H1 (cell line): ENCODE measurements at regions of chr1 and their contacts with region 1.

Region 1: DNA sequence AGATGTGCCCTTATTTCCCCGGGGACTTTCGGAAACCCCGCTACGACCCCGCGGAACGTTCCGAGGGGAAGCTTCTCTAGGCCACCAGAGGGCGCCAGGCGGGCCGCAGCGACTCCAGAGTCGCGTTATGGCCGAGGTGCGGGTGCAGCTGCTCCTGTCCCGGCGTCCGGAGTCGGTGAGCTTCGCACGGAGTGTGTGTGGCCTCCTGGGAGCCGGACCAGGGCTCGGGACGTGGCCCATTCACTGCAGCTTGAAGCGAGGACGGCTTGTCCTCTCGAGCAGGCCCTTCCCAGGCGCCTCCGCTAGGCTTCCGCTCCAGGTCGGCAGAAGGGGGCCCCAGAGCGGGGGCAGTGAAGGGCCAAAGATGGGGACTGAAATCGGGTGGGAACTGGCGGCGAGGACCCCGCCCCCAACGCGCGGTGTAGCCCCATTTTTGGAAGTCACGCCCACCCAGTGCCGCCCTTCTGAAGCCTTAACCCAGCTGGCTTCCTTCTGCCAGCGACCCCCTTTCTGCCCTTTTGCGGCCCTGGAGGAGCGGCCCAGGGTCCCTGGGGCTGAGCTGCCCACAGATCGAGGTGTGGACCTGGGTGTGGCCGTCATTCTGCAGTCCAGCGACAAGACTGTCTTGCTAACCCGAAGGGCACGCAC is at the start of gene NUDT17:
- DNase-seq: peak; percentile 38 to 93
- H3K4me3 ChIP-seq: peak within 1 kb of the TSS; percentile 43 to 77 (median 66)
- H3K27ac ChIP-seq: peak within 1 kb of the TSS; percentile 51; the same call in 1 of the 2 replicates
- H3K4me1 ChIP-seq: peaks cover 0 to 8% (median 0%) of the 10 kb centered on the region in 4 experiments; a peak in 2 of 7 replicates
- H3K27me3 ChIP-seq: no peaks in the 10 kb centered on the region
- CTCF ChIP-seq: peak; percentile 85 to 93 (median 88)
- EP300 ChIP-seq: no peak
- POLR2A ChIP-seq: peak in 1 of 2 experiments; percentile 79; a peak in 2 of 3 replicates
- RAD21 ChIP-seq: peak; percentile 40 to 59; a peak in 3 of 4 replicates
- total RNA-seq, gene NUDT17: 2.7 and 2.8 TPM in 2 replicates

Region 2: DNA sequence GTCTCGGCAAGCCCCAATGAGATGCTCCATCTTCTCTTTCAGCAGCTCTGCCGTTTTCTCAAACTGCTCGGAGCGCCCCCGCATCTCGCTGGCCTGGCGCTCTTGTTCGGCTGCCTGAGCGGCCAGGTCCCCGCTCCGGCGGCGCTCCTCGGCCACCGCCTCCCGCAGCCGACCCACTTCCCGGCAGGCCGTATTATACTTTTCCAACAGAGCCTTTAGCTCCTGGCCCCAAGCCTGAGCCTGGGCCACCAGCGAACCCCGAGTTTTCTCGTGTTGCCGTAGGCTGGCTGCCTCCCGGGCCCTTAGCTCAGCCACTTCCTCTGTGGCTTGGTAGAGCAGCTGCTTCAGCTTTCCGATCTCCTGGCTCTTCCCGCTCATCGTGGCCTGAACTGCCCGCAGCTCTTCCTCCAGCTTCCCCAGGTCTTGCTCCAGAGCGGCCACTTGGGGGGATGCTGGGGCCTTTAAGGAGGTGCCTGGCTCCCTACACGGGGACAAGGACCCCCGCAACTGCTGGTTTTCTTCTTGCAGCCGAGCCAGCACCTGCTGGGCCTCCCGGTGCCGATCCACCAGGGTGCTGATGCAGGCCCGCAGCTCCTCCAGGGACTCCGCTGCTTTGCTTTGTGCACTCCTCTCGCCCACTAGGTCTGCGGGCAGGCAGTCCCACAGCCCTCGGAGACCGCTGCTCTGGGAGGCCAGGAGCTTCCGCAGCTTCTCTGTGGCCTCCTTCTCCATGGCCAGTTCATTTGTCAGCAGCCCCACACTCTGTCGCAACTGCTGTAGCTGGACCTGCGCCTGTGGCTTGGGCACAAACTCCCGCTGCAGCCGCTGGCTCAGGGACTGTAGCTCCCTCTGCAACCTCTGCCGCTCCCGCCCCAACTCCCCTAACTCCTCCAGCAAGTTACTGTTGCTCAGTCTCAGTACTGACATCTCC is 26.6 kb after region 1 on chr1:
- CTCF ChIA-PET with region 1: interaction called, 42 read pairs
- POLR2A ChIA-PET with region 1: interaction called, 11 read pairs
- DNase-seq: peak in 1 of 2 experiments; percentile 82
- H3K4me3 ChIP-seq: peak overlapping the region; percentile 36 to 62 (median 52)
- H3K27ac ChIP-seq: no peak overlapping the region
- H3K4me1 ChIP-seq: peaks cover 0 to 11% (median under 1%) of the 10 kb centered on the region in 4 experiments; a peak in 4 of 7 replicates
- H3K27me3 ChIP-seq: peaks cover 0 to 24% (median 12%) of the 10 kb centered on the region in 4 experiments; a peak in 6 of 7 replicates
- CTCF ChIP-seq: no peak
- EP300 ChIP-seq: no peak
- POLR2A ChIP-seq: 0 out of 3 replicates have a peak, but pooled peaks of 1 of the 2 experiments have one; percentile 19
- RAD21 ChIP-seq: no peak

Region 3: DNA sequence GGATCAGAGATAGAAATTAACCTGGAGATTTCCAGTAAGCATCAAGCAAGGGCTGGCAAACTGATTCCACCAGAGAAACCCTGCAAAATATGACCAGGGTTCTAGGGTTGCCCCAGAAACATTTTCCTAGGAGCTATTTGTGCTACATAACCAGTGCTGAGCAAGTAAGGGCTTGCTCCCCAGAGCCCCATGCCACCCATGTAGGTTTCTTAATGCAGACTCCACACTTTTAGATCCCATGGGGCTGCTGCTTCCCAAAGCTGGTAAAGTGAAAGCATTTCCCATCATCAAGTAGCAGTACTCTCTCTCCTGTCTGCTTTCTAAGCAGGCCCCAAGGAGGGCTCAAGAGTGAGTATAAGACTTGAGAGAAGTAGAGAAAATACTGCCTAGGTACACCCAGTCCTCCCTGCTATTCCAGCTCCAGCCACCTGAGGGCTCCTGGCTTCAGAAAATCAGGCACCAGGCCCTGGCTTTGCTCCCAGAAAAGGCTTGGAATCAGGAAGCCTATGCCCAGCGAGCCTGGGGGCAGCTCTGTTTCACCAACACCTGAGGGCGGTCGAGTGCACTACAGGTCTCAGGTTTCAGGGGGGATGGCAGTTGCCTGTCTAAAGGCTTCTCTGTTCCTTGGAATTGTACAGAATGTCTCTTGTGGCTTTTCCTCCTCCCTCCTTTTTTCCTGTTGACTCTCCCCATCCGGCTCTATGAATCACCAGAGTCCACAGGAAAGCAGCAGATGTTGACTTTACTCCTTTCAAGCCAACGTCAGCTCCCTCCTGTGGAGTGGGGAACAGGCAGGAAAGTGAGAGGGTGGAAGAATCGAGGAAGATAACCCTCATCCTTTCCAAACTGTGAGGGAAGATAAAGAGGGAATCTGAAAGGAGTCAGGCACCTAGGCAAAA is 46.2 kb after region 1 on chr1:
- CTCF ChIA-PET with region 1: interaction called, 84 read pairs
- POLR2A ChIA-PET with region 1: interaction called, 8 read pairs
- DNase-seq: peak; percentile 94 to 96
- H3K4me3 ChIP-seq: peak overlapping the region in 3 of 4 experiments; percentile 2 to 48 (median 3); a peak in 4 of 8 replicates
- H3K27ac ChIP-seq: no peak overlapping the region
- H3K4me1 ChIP-seq: peaks cover 0 to 6% (median 4%) of the 10 kb centered on the region in 4 experiments; a peak in 3 of 7 replicates
- H3K27me3 ChIP-seq: no peaks in the 10 kb centered on the region
- CTCF ChIP-seq: peak; percentile 84 to 99 (median 99)
- EP300 ChIP-seq: no peak
- POLR2A ChIP-seq: peak in 1 of 2 experiments; percentile 27; a peak in 1 of 3 replicates
- RAD21 ChIP-seq: peak; percentile 96 to 99

Region 4: DNA sequence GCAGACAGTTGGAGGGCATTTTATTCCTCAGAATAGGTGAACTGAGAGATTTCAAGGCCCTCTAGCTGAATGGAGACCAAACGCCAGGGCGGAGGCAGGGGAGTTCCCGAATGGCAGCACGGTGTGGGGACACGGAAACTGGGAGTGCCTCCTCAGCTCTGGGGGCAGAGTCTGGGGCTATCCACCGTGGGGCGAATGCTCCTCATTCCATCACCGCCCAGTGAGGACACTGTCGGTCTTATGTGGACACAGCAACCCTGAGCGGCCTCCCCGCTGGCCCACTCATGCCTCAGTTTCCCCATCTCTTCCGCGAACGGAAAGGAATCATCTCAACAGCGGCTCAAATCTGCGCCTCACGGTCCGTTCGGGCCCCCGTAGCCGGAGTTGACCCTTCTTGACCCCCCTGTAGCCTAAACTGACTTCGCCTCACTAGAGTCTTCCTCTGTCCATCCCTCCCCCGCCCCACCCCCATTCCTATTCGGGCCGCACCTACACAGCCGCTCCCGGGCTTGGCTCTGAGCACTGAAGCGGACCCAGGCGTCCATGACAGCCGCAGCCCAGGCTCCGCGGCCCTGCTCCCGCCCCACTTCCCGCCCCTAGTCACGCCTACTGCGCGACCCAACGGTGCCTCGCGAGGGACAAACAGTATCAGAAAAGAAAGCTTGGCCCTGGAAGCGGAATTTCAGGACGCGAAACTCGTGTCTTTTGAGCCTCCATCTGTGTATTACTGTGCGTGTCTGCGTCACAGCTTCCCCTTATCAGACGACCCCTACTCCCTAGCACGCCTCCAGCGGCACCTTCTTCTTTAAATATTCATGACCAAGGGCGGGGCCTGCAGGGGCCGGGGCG is 72.7 kb after region 1 on chr1 and contains the start of gene PEX11B:
- CTCF ChIA-PET with region 1: interaction called, 11 read pairs
- POLR2A ChIA-PET with region 1: interaction called, 3 read pairs
- DNase-seq: peak in 1 of 2 experiments; percentile 92
- H3K4me3 ChIP-seq: peak within 1 kb of the TSS; percentile 71 to 96 (median 82)
- H3K27ac ChIP-seq: no peak within 1 kb of the TSS
- H3K4me1 ChIP-seq: peaks cover 0 to 6% (median 2%) of the 10 kb centered on the region in 4 experiments; a peak in 6 of 7 replicates
- H3K27me3 ChIP-seq: no peaks in the 10 kb centered on the region
- CTCF ChIP-seq: no peak
- EP300 ChIP-seq: no peak
- POLR2A ChIP-seq: 0 out of 3 replicates have a peak, but pooled peaks of 1 of the 2 experiments have one; percentile 11
- RAD21 ChIP-seq: no peak
- total RNA-seq, gene PEX11B: 8.1 and 9.1 TPM in 2 replicates

Region 5: GRCh38 chr1:146012737-146013403 is 167.2 kb after region 1 on chr1:
- CTCF ChIA-PET with region 1: interaction called, 38 read pairs
- POLR2A ChIA-PET with region 1: interaction called, 3 read pairs
- DNase-seq: no peak
- H3K4me3 ChIP-seq: no peak overlapping the region
- H3K27ac ChIP-seq: no peak overlapping the region
- H3K4me1 ChIP-seq: no peaks in the 10 kb centered on the region; a peak in 1 of 7 replicates
- H3K27me3 ChIP-seq: 0 out of 7 replicates have a peak, but pooled peaks cover 0 to under 1% (median 0%) of the 10 kb centered on the region in 4 experiments
- CTCF ChIP-seq: peak in 2 of 3 experiments; percentile 65 to 72; a peak in 3 of 4 replicates
- EP300 ChIP-seq: no peak
- POLR2A ChIP-seq: no peak
- RAD21 ChIP-seq: peak; percentile 87 to 91